ENCODE measurements at regions of chr17 and their contacts with region 1.

Region 1: DNA sequence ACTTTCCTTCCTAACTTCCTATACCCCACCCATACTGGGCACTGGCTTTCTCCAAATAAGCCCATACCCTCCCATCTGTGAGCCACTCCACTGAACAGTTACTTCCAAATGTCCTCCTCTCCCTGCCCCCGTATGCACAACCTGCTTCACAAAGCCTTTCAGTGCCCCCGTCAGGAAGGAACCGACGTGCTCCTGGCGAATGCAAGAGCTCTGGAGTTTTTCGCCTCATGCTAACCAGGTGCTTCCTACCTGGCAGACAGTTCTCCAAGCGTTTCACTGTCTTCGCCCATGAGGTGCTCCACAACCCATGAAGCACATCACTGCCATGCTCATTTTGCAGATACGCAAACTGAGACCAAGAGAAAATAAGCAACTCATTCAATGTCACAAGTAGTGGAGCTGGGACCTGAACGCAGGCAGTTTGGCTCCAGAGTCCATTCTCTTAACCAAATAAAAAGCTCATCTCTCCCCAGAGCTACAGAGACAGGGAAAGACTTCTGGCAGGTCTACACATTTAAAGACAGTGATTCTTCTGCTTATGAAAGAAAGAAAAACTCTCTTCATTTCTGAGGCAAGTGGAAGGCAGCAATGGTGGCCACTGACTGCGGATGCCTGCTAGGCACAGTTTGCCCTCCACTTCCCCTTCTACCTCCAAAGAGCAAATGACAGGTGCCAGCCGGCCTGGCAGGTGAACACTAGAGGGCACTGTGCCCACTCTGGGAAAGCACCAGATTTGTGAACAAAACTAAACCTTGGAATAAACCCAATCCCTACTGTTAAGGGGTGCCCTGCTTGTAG is 23.8 kb downstream of the SPHK1 start:
- DNase-seq: peak; percentile 63
- ATAC-seq: peak; percentile 80
- H3K4me3 Mint-ChIP-seq: peak overlapping the region; percentile 35
- H3K27ac Mint-ChIP-seq: peak overlapping the region; percentile 30
- H3K4me1 Mint-ChIP-seq: peaks cover 47% of the 10 kb centered on the region
- H3K27me3 Mint-ChIP-seq: no peaks in the 10 kb centered on the region
- CTCF ChIP-seq: peak; percentile 85

Region 2: GRCh38 chr17:76337413-76337777 is 70.9 kb before region 1 on chr17:
- CTCF ChIA-PET with region 1: no interaction called
- POLR2A ChIA-PET with region 1: no interaction called
- intact Hi-C with region 1: no loop called
- DNase-seq: no peak
- ATAC-seq: no peak
- H3K4me3 Mint-ChIP-seq: no peak overlapping the region
- H3K27ac Mint-ChIP-seq: no peak overlapping the region
- H3K4me1 Mint-ChIP-seq: no peaks in the 10 kb centered on the region
- H3K27me3 Mint-ChIP-seq: no peaks in the 10 kb centered on the region
- CTCF ChIP-seq: no peak

Region 3: GRCh38 chr17:76397687-76398487 is 10.4 kb before region 1 on chr17:
- CTCF ChIA-PET with region 1: interaction called, 21 read pairs
- POLR2A ChIA-PET with region 1: no interaction called
- intact Hi-C with region 1: loop called (anchors 1 kb)
- DNase-seq: peak; percentile 79
- ATAC-seq: peak; percentile 93
- H3K4me3 Mint-ChIP-seq: no peak overlapping the region
- H3K27ac Mint-ChIP-seq: no peak overlapping the region
- H3K4me1 Mint-ChIP-seq: peaks cover 3% of the 10 kb centered on the region
- H3K27me3 Mint-ChIP-seq: no peaks in the 10 kb centered on the region
- CTCF ChIP-seq: peak; percentile 98

Region 4: GRCh38 chr17:76458580-76459490 is 50.6 kb after region 1 on chr17:
- CTCF ChIA-PET with region 1: interaction called, 81 read pairs
- POLR2A ChIA-PET with region 1: interaction called, 6 read pairs
- intact Hi-C with region 1: loop called (anchors 1 kb)
- DNase-seq: no peak
- ATAC-seq: peak; percentile 79
- H3K4me3 Mint-ChIP-seq: no peak overlapping the region
- H3K27ac Mint-ChIP-seq: no peak overlapping the region
- H3K4me1 Mint-ChIP-seq: no peaks in the 10 kb centered on the region
- H3K27me3 Mint-ChIP-seq: no peaks in the 10 kb centered on the region
- CTCF ChIP-seq: no peak

Region 5: DNA sequence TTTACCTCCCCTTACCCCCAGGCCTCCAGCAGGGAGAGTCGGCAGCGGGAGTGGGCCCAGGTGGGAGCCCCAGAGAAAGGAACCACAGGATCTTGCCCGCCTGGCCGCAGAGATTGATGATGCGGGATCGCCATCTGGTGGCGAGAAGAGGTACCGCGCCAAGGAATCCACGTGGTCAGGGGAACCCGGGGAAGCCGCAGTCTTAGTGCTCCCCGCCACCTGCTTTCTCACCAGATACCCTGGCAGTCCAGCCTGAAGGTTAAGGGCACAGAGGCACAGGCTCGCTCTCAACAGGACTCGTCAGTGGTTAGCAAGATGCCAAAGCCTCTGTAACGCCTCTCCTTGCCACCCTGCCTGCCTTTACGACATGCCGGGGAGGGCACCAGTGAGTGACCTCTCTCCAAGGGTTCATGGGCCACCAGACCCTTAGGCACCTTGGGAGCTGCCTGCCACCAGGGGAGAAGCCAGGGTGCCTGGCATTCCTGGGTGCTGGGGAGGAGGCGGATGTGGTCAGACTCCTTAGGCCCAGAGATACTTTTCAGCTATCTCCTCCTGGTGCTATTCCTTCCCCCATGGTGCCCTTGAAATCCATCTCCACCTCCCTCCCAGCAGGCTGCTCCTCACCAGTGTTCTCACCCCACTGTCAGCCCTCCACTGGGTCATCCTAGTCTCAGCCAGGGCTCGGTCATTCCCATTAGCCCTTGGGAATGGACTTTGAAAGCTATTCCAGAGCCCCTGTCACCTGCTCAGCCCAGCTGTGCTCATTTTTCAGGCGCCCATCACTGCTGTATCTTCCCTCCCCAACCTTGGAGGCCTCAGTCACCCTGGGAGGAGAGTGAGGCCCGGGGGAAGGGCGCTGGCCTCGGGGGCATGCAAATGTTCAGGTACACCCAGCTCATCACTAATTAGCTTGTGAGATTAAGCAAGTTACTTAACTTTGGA is 98.4 kb after region 1 on chr17:
- CTCF ChIA-PET with region 1: interaction called, 19 read pairs
- POLR2A ChIA-PET with region 1: interaction called, 6 read pairs
- intact Hi-C with region 1: loop called (anchors 1 kb)
- DNase-seq: peak; percentile 93
- ATAC-seq: peak; percentile 85
- H3K4me3 Mint-ChIP-seq: no peak overlapping the region
- H3K27ac Mint-ChIP-seq: peak overlapping the region; percentile 50
- H3K4me1 Mint-ChIP-seq: peaks cover 26% of the 10 kb centered on the region
- H3K27me3 Mint-ChIP-seq: peaks cover 4% of the 10 kb centered on the region
- CTCF ChIP-seq: peak; percentile 66

Measured in activated B cell treated with CpG ODN at 0.5 μM for 24 hours (primary cell).